ENCODE measurements at regions of chr12 and their contacts with region 1.

Region 1: GRCh38 chr12:47547085-47547484 is 158.7 kb downstream of the RPAP3 start:
- DNase-seq: peak in 3 of 4 experiments; percentile 13 to 19 (median 15)
- ATAC-seq: peak; percentile 65; the same call in 1 of the 3 replicates
- H3K4me3 ChIP-seq: no peak overlapping the region
- H3K27ac ChIP-seq: no peak overlapping the region
- H3K4me1 ChIP-seq: no peaks in the 10 kb centered on the region; a peak in 1 of 5 replicates
- H3K27me3 ChIP-seq: peaks cover 0 to 8% of the 10 kb centered on the region in 2 experiments; a peak in 1 of 5 replicates
- CTCF ChIP-seq: peak; percentile 38 to 61 (median 52); a peak in 4 of 6 replicates
- EP300 ChIP-seq: no peak
- POLR2A ChIP-seq: no peak
- RAD21 ChIP-seq: peak in 1 of 2 experiments; percentile 64; a peak in 2 of 4 replicates

Region 2: DNA sequence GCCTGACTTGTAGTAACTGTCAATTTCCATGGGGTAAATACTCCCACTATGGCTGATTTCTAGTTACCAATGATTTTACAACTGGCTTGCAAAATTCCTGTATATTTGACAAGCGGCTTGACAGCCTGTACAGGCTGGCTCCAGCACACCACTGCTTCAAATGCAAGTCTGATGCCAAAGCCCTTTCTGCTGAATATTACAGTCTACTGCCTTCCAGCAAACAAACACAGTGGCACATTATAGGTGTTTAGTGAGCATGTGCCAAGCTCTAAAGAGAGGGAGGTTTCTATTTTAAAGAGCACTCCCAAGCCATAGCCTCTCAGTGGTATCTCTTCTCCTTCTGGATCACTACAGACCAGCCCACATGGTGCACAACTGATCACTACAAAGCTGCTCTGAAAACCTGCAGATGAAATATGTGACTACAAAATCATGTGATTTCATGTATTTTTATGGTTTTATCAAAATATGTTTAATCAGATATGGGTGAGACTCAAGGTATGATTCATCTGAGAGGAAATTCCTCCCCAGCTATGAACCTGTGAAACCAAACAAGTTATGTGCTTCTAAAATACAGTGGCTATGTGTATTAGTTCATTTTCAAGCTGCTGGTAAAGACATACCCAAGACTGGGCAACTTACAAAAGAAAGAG is 57.3 kb after region 1 on chr12:
- CTCF ChIA-PET with region 1: no interaction called
- POLR2A ChIA-PET with region 1: no interaction called
- in situ Hi-C with region 1: no loop called
- intact Hi-C with region 1: no loop called
- DNase-seq: no peak
- ATAC-seq: no peak
- H3K4me3 ChIP-seq: no peak overlapping the region
- H3K27ac ChIP-seq: no peak overlapping the region
- H3K4me1 ChIP-seq: no peaks in the 10 kb centered on the region; a peak in 1 of 5 replicates
- H3K27me3 ChIP-seq: no peaks in the 10 kb centered on the region
- CTCF ChIP-seq: no peak
- EP300 ChIP-seq: no peak
- POLR2A ChIP-seq: no peak
- RAD21 ChIP-seq: no peak

Region 3: GRCh38 chr12:47636908-47637780 is 90.1 kb after region 1 on chr12:
- CTCF ChIA-PET with region 1: no interaction called
- POLR2A ChIA-PET with region 1: no interaction called
- in situ Hi-C with region 1: no loop called
- intact Hi-C with region 1: loop called (anchors 5 kb)
- DNase-seq: peak in 2 of 4 experiments; percentile 17 to 78
- ATAC-seq: peak; percentile 88
- H3K4me3 ChIP-seq: no peak overlapping the region
- H3K27ac ChIP-seq: peak overlapping the region; percentile 26; the same call in 1 of the 3 replicates
- H3K4me1 ChIP-seq: peaks cover 0 to 7% of the 10 kb centered on the region in 2 experiments; a peak in 2 of 5 replicates
- H3K27me3 ChIP-seq: no peaks in the 10 kb centered on the region
- CTCF ChIP-seq: peak; percentile 72 to 80 (median 78)
- EP300 ChIP-seq: no peak
- POLR2A ChIP-seq: no peak
- RAD21 ChIP-seq: peak in 1 of 2 experiments; percentile 56; a peak in 2 of 4 replicates

Region 4: GRCh38 chr12:47686645-47687240 is 139.7 kb after region 1 on chr12:
- CTCF ChIA-PET with region 1: no interaction called
- POLR2A ChIA-PET with region 1: no interaction called
- in situ Hi-C with region 1: no loop called
- intact Hi-C with region 1: loop called (anchors 2 kb)
- DNase-seq: peak; percentile 22 to 39 (median 34)
- ATAC-seq: peak; percentile 83
- H3K4me3 ChIP-seq: no peak overlapping the region
- H3K27ac ChIP-seq: no peak overlapping the region
- H3K4me1 ChIP-seq: no peaks in the 10 kb centered on the region
- H3K27me3 ChIP-seq: no peaks in the 10 kb centered on the region
- CTCF ChIP-seq: peak; percentile 21 to 72 (median 55); a peak in 4 of 6 replicates
- EP300 ChIP-seq: no peak
- POLR2A ChIP-seq: no peak
- RAD21 ChIP-seq: peak; percentile 73 to 87

Region 5: GRCh38 chr12:47819896-47820630 is 273.0 kb after region 1 on chr12 and contains the start of gene HDAC7:
- CTCF ChIA-PET with region 1: no interaction called
- POLR2A ChIA-PET with region 1: no interaction called
- in situ Hi-C with region 1: no loop called
- intact Hi-C with region 1: no loop called
- DNase-seq: peak; percentile 89 to 95 (median 92)
- ATAC-seq: peak; percentile 82
- H3K4me3 ChIP-seq: peak within 1 kb of the TSS; percentile 68
- H3K27ac ChIP-seq: peak within 1 kb of the TSS; percentile 80
- H3K4me1 ChIP-seq: peaks cover 39 to 51% of the 10 kb centered on the region in 2 experiments
- H3K27me3 ChIP-seq: no peaks in the 10 kb centered on the region
- CTCF ChIP-seq: peak in 1 of 3 experiments; percentile 20; a peak in 1 of 6 replicates
- EP300 ChIP-seq: no peak
- POLR2A ChIP-seq: no peak
- RAD21 ChIP-seq: 0 out of 4 replicates have a peak, but pooled peaks of 1 of the 2 experiments have one; percentile 16
- polyA plus RNA-seq, gene HDAC7: 2.5 to 3.8 TPM